IMR-90 (cell line): ENCODE measurements at regions of chr7 and their contacts with region 1.

Region 1: GRCh38 chr7:32490127-32490822 is at the start of gene LSM5:
- DNase-seq: peak; percentile 95
- ATAC-seq: peak; percentile 81
- H3K4me3 ChIP-seq: peak within 1 kb of the TSS; percentile 82
- H3K27ac ChIP-seq: peak within 1 kb of the TSS; percentile 88
- H3K4me1 ChIP-seq: peaks cover 4% of the 10 kb centered on the region; the same call in 1 of the 2 replicates
- H3K27me3 ChIP-seq: no peaks in the 10 kb centered on the region
- CTCF ChIP-seq: no peak
- POLR2A ChIP-seq: peak; percentile 48; the same call in 1 of the 2 replicates
- RAD21 ChIP-seq: no peak
- total RNA-seq, gene LSM5: 5.0 and 36.4 TPM in 2 replicates

Region 2: DNA sequence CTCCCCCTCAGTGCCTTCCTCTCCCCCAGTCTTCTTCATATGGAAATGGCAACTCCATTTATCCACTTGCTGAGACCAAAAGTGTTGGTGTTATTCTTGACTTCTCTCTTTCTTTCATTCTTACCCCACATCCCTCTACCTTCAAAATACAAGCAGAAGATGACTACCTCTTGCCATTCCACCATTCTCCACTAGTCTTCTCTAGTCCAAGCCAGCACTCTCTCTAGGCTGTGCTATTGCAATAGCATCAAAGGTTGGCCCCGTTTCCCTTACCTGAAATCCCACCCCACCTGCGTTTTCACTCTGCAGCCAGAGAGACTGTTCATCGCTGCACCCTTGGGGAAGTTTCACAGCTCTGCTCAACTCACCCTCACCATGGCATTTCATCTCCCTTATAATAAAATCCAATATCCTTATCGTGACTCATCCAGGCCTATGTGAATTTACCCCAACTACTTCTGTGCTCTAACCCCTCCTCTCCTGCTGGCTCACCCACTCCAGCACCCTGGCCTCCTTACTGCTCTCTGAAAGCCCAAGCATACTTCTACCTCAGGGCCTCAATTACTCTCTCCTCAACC is 109.2 kb before region 1 on chr7:
- CTCF ChIA-PET with region 1: no interaction called
- POLR2A ChIA-PET with region 1: no interaction called
- dilution Hi-C with region 1: no loop called
- in situ Hi-C with region 1: no loop called
- intact Hi-C with region 1: no loop called
- DNase-seq: no peak
- ATAC-seq: no peak
- H3K4me3 ChIP-seq: no peak overlapping the region
- H3K27ac ChIP-seq: no peak overlapping the region
- H3K4me1 ChIP-seq: no peaks in the 10 kb centered on the region
- H3K27me3 ChIP-seq: no peaks in the 10 kb centered on the region
- CTCF ChIP-seq: no peak
- POLR2A ChIP-seq: no peak
- RAD21 ChIP-seq: no peak

Region 3: DNA sequence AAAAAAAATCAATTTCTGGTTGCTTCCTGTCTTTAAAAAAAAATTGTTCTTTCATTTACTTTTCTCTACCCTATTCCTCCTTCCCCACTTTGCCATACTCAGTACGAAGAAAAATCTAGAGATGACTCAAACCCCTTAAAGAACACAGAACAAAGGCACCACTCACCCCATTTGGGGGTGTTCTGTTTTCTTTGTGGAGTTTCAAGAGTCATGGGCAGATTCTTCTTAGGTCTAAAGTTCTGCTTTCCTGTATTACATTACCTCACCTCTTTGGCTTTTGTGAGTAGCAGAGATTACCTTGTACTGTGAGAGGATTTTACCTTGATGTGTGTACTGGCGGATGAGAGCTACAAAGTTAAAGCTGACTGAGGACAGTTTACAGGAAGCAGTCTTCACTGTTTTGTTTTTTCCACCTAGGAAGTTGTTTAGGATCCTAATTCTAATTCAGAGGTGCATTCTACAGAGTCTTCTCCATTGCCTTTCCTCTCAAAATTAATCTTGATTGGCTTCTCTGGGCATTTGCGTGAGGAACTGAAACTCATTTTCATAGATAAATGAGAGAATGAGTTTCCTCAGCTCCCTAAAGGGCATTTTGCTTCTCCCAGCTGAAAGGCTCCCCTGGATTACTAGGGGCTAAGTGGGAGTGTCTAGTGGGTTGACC is 25.7 kb after region 1 on chr7:
- CTCF ChIA-PET with region 1: no interaction called
- POLR2A ChIA-PET with region 1: no interaction called
- dilution Hi-C with region 1: no loop called
- in situ Hi-C with region 1: no loop called
- intact Hi-C with region 1: no loop called
- DNase-seq: peak; percentile 27
- ATAC-seq: no peak
- H3K4me3 ChIP-seq: no peak overlapping the region
- H3K27ac ChIP-seq: no peak overlapping the region
- H3K4me1 ChIP-seq: no peaks in the 10 kb centered on the region
- H3K27me3 ChIP-seq: no peaks in the 10 kb centered on the region
- CTCF ChIP-seq: no peak
- POLR2A ChIP-seq: no peak
- RAD21 ChIP-seq: no peak

Region 4: DNA sequence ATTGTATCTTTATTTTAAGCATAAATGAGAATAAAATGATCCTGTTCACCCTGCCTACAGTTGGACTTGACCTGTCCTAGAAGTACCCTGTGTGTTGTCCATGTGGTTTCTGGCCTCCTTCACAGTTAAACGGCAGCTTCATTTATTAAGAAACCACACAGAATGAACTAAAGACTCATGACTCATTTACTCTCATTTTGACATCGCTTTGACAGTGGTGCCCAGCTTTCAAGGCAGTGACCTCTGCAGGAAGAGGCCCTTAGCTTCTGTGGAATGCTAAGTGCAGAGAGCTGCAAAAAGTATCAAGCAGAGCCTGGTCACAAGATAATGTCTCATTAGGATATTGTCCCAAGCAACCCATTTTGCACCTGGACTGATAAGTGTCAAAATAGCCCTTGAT is 98.4 kb after region 1 on chr7:
- CTCF ChIA-PET with region 1: interaction called, 5 read pairs
- POLR2A ChIA-PET with region 1: no interaction called
- dilution Hi-C with region 1: no loop called
- in situ Hi-C with region 1: no loop called
- intact Hi-C with region 1: loop called (anchors 2 kb)
- DNase-seq: peak; percentile 73
- ATAC-seq: peak; percentile 45; the same call in 1 of the 2 replicates
- H3K4me3 ChIP-seq: no peak overlapping the region
- H3K27ac ChIP-seq: peak overlapping the region; percentile 0; the same call in 1 of the 2 replicates
- H3K4me1 ChIP-seq: peaks cover 17% of the 10 kb centered on the region
- H3K27me3 ChIP-seq: no peaks in the 10 kb centered on the region
- CTCF ChIP-seq: no peak
- POLR2A ChIP-seq: no peak
- RAD21 ChIP-seq: no peak